Heart right ventricle (tissue), 16 donors: ENCODE measurements at regions of chr9 and their contacts with region 1.

Region 1: DNA sequence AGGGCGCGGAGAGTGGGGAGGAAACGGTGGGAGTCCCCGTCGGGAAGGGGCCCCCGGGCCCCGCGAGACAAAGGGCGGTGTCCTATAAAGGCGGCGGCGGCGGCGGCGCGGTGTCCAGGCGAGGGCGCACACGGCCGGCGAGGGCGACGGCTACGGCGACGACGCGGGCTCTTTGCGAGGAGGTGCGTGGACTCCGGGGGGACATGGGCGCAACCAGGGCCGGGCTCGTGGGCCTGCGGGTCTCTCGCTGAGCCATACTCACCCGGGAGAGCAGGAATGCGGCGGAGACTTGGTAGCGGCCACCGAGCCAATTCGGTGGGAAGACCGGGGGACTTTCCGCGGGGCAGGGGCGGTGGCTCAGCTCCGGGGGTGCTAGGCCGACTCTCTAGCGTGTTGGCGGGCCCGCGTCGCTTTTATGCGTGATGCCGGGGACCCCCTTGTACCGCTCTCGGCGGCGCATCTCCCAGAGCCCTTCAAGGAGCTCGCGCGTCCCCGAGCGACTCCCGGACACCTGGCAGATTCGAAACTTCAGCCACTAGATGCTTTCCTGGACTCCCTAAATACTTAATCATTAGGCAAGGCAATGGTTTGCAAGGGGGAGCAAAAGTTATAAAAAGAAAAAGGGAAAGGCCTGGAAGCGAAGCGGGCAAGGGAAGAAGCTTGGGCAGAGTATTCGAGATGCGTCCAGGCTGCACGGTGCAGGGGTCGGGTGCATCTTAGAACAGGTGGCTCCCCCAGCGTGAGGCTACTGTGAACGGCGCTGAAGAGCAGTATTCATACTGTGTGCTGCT is 5.9 kb upstream of the TAL2 start:
- DNase-seq: peak; percentile 5 to 48
- ATAC-seq: peak; percentile 79 to 94 (median 91)
- H3K4me3 ChIP-seq: peak overlapping the region; percentile 16 to 75 (median 57)
- H3K27ac ChIP-seq: peak overlapping the region in 1 of 10 donors; percentile 20
- H3K4me1 ChIP-seq: peaks cover 0 to 16% (median 13%) of the 10 kb centered on the region in 9 donors
- H3K27me3 ChIP-seq: peaks cover 0 to 36% (median 27%) of the 10 kb centered on the region in 7 donors
- CTCF ChIP-seq: peak; percentile 20 to 66 (median 43)

Region 2: DNA sequence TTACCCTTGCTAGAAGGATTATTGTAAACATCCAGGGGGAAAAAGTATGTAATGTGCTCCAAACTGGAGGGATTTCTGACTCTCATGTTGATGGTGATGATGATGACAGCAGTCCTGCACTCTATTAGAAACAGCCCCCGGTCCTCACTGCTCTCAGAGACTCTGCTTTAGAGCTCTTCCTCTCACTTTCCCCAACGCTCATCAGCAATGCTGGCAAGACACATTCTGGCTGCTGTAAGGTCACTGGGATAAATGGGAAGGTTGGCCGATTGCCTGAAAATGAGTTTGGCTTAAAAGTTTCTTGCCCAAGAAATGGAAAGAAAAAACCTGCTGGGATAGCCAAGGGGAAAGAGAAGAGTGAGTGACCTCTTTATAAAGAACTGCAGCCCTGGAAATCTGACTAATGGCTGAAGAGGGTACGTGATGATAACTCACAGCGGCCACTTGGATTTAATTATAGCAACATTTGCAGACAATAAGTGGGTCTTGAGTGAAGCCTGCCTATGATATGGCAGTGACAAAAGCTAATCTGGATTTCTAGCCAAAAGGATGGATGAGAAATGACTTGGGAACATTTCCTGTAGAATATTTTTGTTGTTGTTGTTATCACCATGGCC is 273.8 kb after region 1 on chr9:
- intact Hi-C with region 1: loop called in 1 of 10 experiments (anchors 5 kb)
- DNase-seq: peak; percentile 8 to 35
- ATAC-seq: peak; percentile 28 to 97 (median 92)
- H3K4me3 ChIP-seq: peak overlapping the region in 1 of 10 donors; percentile 3
- H3K27ac ChIP-seq: peak overlapping the region in 9 of 10 donors; percentile 16 to 62 (median 53)
- H3K4me1 ChIP-seq: peaks cover 0 to 16% (median 5%) of the 10 kb centered on the region in 9 donors
- H3K27me3 ChIP-seq: no peaks in the 10 kb centered on the region
- CTCF ChIP-seq: no peak

Region 3: GRCh38 chr9:107316795-107317661 is 1660.7 kb after region 1 on chr9:
- intact Hi-C with region 1: loop called in 1 of 10 experiments (anchors 5 kb)
- DNase-seq: no peak
- ATAC-seq: no peak
- H3K4me3 ChIP-seq: no peak overlapping the region
- H3K27ac ChIP-seq: no peak overlapping the region
- H3K4me1 ChIP-seq: peaks cover 0 to 40% (median 18%) of the 10 kb centered on the region in 9 donors
- H3K27me3 ChIP-seq: no peaks in the 10 kb centered on the region
- CTCF ChIP-seq: no peak